Activated CD4-positive, alpha-beta T cell treated with anti-CD3 and anti-CD28 coated beads, Interleukin-2, amount 10 ng/mL, durations not matched to agents 24 days and 14 days (primary cell): ENCODE measurements at regions of chrX and their contacts with region 1.

Region 1: DNA sequence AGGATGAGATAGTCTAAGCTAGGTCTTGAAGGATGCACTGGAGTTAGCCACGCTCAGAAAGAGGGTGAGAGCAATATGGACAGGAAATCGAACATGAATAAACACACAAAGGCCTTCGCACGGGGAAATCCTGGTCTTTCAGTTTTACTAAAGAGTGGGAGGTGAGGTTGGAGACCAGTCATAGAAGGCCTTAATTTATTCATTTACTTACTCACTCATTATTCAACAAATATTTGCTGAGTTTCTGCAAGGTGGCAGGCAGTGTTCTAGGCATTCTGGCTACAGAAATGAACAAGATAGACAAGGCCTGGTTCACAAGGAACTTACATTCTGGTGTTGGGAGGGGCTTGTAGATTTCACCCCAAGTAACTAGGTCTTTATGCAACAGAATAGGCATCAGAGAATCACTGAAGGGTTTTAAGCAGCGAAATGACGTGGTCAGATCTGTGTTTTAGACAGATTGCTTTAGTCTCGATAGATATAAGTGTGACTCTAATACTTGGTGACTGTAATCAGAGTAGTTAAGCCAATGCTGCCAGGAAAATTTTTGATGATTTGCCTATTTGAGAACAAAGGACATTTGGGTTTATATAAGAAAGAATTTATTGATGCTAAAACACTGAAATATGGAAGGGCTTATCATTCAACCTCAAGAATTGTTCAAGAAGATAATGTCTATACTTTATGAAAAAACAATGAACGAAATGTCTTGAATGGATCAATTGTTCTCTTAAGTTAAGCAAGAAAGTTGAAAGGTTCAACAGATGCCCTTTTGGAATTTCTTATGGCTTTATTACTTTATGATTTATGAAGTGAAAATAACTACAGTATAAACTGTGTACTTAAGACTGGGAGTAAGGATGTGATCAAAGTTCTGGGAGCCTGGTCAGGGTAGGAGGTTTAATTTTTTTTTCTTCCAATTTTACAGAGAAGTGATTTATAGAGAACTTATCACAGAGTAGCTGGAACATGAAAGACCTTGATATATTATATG is 184.4 kb upstream of the CASK start:
- DNase-seq: peak; percentile 55
- H3K4me3 Mint-ChIP-seq: no peak overlapping the region
- H3K27ac Mint-ChIP-seq: peak overlapping the region; percentile 67
- H3K4me1 Mint-ChIP-seq: peaks cover 20% of the 10 kb centered on the region
- H3K27me3 Mint-ChIP-seq: no peaks in the 10 kb centered on the region

Region 2: GRCh38 chrX:41906515-41907165 is 201.2 kb before region 1 on chrX:
- intact Hi-C with region 1: loop called (anchors 5 kb)
- DNase-seq: no peak
- H3K4me3 Mint-ChIP-seq: no peak overlapping the region
- H3K27ac Mint-ChIP-seq: peak overlapping the region; percentile 65
- H3K4me1 Mint-ChIP-seq: peaks cover 18% of the 10 kb centered on the region
- H3K27me3 Mint-ChIP-seq: no peaks in the 10 kb centered on the region

Region 3: DNA sequence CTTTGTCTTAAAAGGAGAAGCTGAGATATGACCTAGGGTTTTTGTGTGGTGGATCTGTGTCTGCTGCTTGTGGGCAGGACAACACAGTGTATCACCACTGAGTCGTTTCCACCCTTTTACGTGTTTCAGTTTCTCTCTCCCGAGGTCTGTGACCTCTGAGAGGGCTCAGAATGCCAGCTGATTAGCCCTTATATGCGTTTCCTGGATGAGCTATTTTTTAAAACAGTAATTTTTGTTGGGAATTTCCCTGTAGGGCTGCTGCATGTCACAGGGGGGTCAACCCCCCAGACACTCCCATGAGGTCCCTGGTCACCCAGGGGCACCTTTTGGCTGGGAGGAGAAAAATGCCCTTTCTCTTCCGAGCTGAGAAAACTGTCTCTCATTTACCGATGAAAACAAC is 14.0 kb before region 1 on chrX:
- intact Hi-C with region 1: loop called (anchors 2 kb)
- DNase-seq: no peak
- H3K4me3 Mint-ChIP-seq: peak overlapping the region; percentile 6
- H3K27ac Mint-ChIP-seq: peak overlapping the region; percentile 20
- H3K4me1 Mint-ChIP-seq: peaks cover 13% of the 10 kb centered on the region
- H3K27me3 Mint-ChIP-seq: no peaks in the 10 kb centered on the region

Region 4: GRCh38 chrX:42606591-42606990 is 498.8 kb after region 1 on chrX:
- intact Hi-C with region 1: no loop called
- DNase-seq: no peak
- H3K4me3 Mint-ChIP-seq: no peak overlapping the region
- H3K27ac Mint-ChIP-seq: no peak overlapping the region
- H3K4me1 Mint-ChIP-seq: no peaks in the 10 kb centered on the region
- H3K27me3 Mint-ChIP-seq: no peaks in the 10 kb centered on the region